ENCODE measurements at regions of chr3 and their contacts with region 1.

Region 1: DNA sequence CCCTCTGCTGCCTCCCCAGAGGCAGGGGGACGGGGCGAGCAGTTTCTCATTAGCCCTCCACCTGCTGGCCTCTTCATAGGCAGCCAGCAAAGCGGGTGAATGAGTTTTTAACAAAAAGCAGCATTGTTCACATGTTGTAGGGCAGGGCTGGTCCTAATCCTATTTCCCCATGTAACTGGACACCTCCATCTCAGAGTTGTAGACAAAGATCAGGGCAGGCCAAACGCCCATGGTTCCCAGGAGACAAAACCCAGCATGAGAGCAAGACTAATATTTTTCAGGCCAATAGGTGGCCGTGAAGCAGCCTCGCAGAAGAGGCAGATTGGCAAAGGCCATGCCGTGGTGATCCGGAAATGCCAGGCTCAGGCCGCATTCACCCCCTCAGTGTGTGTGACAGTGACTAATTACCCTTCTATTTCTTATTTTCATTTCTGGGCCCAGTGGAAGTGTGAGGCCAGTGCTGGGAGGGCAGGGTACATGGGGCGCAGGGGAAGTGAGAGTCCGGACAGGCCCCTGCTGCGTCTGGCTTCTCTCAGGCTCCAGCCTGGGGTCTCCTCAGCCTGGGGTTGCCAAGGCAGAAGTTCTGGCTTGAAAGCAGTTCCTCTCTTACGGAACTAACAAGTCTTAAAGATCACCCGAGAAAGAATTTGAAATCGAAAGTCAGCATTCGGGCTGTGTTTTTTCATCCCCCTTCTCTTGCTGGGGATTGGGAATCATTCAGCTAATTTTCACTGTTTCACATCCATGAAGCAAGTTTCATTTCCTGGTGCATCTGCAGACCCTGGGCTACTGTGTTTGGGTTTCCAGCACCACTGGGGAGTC is 64.8 kb downstream of the BOC start:
- DNase-seq: no peak
- H3K4me3 ChIP-seq: no peak overlapping the region; a peak in 1 of 8 replicates
- H3K27ac ChIP-seq: no peak overlapping the region
- H3K4me1 ChIP-seq: peaks cover 0 to 11% (median 5%) of the 10 kb centered on the region in 4 experiments; a peak in 5 of 7 replicates
- H3K27me3 ChIP-seq: no peaks in the 10 kb centered on the region
- CTCF ChIP-seq: peak; percentile 8 to 54 (median 39)
- EP300 ChIP-seq: no peak
- POLR2A ChIP-seq: no peak
- RAD21 ChIP-seq: peak; percentile 23 to 48; a peak in 3 of 4 replicates

Region 2: DNA sequence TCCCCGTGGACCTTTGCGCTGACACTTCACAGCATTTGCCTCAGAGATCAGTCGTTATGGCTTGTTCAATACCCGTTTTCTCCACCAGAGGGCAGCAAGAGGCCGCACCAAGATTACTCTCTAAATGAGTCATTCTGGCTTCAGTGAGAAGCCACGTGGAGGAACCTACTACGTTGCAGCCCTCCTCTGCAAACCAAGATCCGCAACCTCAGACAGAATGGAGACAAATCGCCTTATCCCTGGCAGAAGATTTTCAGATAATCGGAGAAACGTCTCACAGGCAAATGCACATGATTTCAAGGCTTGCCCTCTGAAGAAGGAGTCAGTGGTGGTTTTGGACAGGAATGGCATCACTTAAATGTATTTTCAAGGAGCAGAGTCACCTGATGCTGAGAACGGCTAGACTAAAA is 224.8 kb before region 1 on chr3:
- CTCF ChIA-PET with region 1: interaction called, 28 read pairs
- POLR2A ChIA-PET with region 1: no interaction called
- DNase-seq: peak; percentile 38 to 95
- H3K4me3 ChIP-seq: no peak overlapping the region
- H3K27ac ChIP-seq: no peak overlapping the region
- H3K4me1 ChIP-seq: no peaks in the 10 kb centered on the region
- H3K27me3 ChIP-seq: peaks cover 0 to 3% (median 1%) of the 10 kb centered on the region in 4 experiments; a peak in 1 of 7 replicates
- CTCF ChIP-seq: peak; percentile 48 to 91 (median 80)
- EP300 ChIP-seq: no peak
- POLR2A ChIP-seq: no peak
- RAD21 ChIP-seq: peak; percentile 95 to 99

Region 3: GRCh38 chr3:113255100-113255853 is 20.9 kb before region 1 on chr3:
- CTCF ChIA-PET with region 1: interaction called, 63 read pairs
- POLR2A ChIA-PET with region 1: no interaction called
- DNase-seq: no peak
- H3K4me3 ChIP-seq: no peak overlapping the region
- H3K27ac ChIP-seq: no peak overlapping the region
- H3K4me1 ChIP-seq: peaks cover 0 to 5% (median 4%) of the 10 kb centered on the region in 4 experiments; a peak in 4 of 7 replicates
- H3K27me3 ChIP-seq: no peaks in the 10 kb centered on the region
- CTCF ChIP-seq: peak; percentile 44 to 47 (median 45)
- EP300 ChIP-seq: no peak
- POLR2A ChIP-seq: no peak
- RAD21 ChIP-seq: peak; percentile 19 to 49; a peak in 3 of 4 replicates

Region 4: DNA sequence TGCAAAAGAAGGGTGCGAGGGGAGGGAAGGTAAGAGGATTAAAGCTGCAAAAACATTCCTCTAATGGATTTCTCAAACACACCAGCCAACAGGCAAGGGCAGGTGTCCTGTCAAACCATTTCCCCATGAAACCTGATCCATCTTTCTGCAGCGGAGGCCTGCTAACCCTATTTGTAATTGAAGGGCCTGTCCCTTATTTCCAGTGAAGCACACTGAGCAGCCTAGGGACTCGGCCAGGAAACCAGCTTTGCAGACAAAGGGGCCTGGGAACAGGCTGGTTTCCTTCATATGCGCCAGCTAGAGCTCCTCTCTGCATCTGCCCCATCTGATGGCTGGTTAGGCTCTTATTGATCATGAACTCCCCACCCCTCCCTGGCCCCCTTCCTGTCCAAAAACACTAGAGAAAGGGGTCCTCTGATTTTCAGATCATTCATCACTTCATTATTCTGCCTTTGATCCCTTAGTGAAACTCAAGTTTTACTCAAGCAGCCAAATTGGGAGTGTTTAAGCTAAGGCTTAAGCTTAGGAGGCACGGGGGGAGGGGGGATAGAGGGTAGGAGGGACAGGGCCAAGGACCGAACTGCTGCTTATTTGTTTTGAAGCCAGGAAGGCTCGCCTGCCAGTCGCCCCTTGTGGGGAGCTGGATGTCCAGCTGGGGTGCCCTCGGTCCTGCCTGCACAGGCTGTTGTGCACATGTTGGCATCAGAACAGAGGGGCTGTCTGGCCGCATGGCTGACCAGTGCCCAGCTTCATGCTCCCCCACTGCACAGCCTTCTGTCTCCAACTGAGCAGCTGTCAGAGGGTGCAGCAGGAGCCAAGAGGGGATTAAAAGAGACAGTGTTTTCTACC is 11.6 kb before region 1 on chr3:
- CTCF ChIA-PET with region 1: interaction called, 63 read pairs
- POLR2A ChIA-PET with region 1: interaction called, 3 read pairs
- DNase-seq: peak; percentile 36 to 59
- H3K4me3 ChIP-seq: peak overlapping the region in 3 of 4 experiments; percentile 7 to 28 (median 8); a peak in 3 of 8 replicates
- H3K27ac ChIP-seq: peak overlapping the region; percentile 44; the same call in 1 of the 2 replicates
- H3K4me1 ChIP-seq: peaks cover 7 to 29% (median 21%) of the 10 kb centered on the region in 4 experiments
- H3K27me3 ChIP-seq: 0 out of 7 replicates have a peak, but pooled peaks cover 0 to 1% (median 0%) of the 10 kb centered on the region in 4 experiments
- CTCF ChIP-seq: no peak
- EP300 ChIP-seq: no peak
- POLR2A ChIP-seq: no peak
- RAD21 ChIP-seq: no peak

Region 5: DNA sequence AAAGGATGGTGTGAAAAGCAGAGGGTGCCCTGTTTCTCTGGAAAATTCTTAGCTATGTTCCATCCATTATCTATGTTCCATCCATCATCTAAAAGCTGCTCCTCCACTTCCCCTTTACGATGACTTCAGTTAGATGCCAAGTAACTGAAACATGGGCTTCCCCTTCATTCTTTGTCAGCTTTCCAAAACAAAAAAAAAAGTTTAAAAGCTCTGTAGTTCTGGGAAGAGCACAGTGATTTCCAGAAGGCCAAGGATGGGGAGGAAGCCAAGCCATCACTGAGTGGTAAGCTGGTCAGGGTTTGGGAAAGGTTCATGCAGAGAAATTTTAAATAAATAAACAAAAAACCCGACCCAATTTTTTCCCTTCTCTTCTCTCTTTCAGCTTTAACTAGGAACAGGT is 53.6 kb after region 1 on chr3:
- CTCF ChIA-PET with region 1: no interaction called
- POLR2A ChIA-PET with region 1: no interaction called
- DNase-seq: no peak
- H3K4me3 ChIP-seq: no peak overlapping the region
- H3K27ac ChIP-seq: no peak overlapping the region
- H3K4me1 ChIP-seq: no peaks in the 10 kb centered on the region
- H3K27me3 ChIP-seq: no peaks in the 10 kb centered on the region
- CTCF ChIP-seq: no peak
- EP300 ChIP-seq: no peak
- POLR2A ChIP-seq: no peak
- RAD21 ChIP-seq: no peak

Measured in H1 (cell line).